Activated naive CD4-positive, alpha-beta T cell treated with anti-CD3 and anti-CD28 coated beads, Interleukin-2, amount 10 ng/mL, durations not matched to agents 7 days and 5 days (primary cell): ENCODE measurements at regions of chr1 and their contacts with region 1.

Region 1: DNA sequence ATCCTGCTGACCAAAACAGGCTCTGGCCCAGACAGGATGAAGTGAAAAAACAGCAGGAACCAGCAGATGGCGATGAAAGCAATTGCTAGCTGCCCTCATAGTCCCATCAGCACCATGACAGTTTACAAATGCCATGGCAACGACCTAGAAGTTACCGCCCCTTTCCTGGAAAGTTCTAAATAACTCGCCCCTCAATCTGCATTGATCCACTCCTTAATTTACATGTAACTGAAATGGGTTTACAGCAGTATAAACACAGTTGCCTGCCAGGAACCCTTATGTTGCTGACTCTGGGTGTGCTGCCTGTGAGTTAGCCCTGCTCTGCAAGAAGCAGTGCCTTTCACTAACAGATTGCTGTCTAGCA is 65.5 kb upstream of the CR1L start:
- DNase-seq: peak; percentile 65
- H3K4me3 Mint-ChIP-seq: no peak overlapping the region
- H3K27ac Mint-ChIP-seq: no peak overlapping the region
- H3K4me1 Mint-ChIP-seq: peaks cover 5% of the 10 kb centered on the region
- H3K27me3 Mint-ChIP-seq: peaks cover 23% of the 10 kb centered on the region

Region 2: GRCh38 chr1:207454046-207454964 is 125.1 kb before region 1 on chr1 and contains the start of gene CR2:
- CTCF ChIA-PET with region 1: no interaction called
- DNase-seq: peak; percentile 52
- H3K4me3 Mint-ChIP-seq: peak within 1 kb of the TSS; percentile 39
- H3K27ac Mint-ChIP-seq: no peak within 1 kb of the TSS
- H3K4me1 Mint-ChIP-seq: peaks cover 11% of the 10 kb centered on the region
- H3K27me3 Mint-ChIP-seq: peaks cover 27% of the 10 kb centered on the region

Region 3: DNA sequence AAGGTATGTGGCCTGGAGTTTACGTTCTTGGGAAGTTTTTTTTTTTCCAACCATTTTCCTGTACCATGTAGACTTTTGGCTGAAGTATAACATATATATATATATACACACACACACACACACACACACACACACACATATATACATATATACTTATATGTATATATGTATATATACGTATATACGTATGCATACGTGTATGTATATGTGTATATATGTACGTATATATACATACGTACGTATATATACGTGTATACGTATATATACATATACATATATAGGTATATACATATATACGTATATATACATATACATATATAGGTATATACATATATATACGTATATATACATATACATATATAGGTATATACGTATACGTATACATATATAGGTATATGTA is 64.5 kb before region 1 on chr1:
- CTCF ChIA-PET with region 1: no interaction called
- DNase-seq: no peak
- H3K4me3 Mint-ChIP-seq: no peak overlapping the region
- H3K27ac Mint-ChIP-seq: no peak overlapping the region
- H3K4me1 Mint-ChIP-seq: no peaks in the 10 kb centered on the region
- H3K27me3 Mint-ChIP-seq: peaks cover 13% of the 10 kb centered on the region

Region 4: DNA sequence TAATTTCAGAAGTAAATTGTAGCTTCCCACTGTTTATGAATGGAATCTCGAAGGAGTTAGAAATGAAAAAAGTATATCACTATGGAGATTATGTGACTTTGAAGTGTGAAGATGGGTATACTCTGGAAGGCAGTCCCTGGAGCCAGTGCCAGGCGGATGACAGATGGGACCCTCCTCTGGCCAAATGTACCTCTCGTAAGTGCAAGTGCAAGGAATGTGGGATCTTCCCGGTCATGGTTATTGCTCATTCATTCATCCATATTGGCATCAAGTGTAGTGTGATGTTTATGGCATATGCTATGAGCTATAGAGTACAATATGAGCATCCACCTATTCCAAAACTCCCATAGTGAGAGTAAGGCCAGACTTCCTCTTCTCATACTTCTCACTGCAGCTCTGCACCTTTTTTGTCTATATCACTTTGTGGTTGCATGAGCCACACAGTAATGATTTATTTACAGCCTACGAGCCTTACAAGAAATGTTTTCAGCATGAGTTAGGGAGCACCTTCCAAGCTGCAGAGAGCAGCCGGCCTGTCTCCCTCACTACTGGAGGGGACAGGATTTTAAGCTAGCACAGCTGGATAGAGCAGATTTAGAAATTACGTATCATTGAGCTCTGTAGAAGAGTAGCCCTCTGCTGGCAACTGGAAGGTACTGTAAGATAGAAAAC is 40.6 kb after region 1 on chr1:
- CTCF ChIA-PET with region 1: interaction called, 16 read pairs
- DNase-seq: peak; percentile 21
- H3K4me3 Mint-ChIP-seq: no peak overlapping the region
- H3K27ac Mint-ChIP-seq: no peak overlapping the region
- H3K4me1 Mint-ChIP-seq: no peaks in the 10 kb centered on the region
- H3K27me3 Mint-ChIP-seq: no peaks in the 10 kb centered on the region

Region 5: DNA sequence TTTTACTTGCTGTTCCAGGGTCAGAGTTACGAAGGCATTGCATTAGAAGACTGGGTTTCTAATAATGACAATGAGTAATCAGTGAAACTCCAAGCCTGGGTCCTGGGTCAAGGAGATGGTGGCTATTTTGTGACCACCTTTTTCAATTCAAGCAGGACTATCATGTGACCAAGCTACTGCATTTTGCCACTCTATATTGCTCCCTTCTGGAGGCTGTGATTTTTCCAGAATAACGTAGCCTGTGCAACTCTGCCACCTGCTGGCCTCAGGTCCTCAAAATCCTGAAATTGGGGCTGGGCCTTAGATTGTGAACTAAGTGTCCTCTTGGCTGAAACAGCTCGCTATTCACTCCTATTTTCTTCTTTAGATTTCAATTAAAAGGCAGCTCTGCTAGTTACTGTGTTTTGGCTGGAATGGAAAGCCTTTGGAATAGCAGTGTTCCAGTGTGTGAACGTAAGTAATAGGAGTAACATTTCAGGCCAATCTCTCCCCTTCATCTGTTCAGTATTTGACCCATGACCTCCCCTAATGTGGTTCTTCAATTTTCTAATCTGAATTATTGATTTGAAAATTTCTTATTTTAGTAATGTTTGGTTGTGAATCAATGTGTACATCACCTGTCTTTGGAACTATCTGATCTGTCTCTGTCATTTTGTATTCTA is 119.5 kb after region 1 on chr1:
- CTCF ChIA-PET with region 1: interaction called, 16 read pairs
- DNase-seq: peak; percentile 57
- H3K4me3 Mint-ChIP-seq: no peak overlapping the region
- H3K27ac Mint-ChIP-seq: no peak overlapping the region
- H3K4me1 Mint-ChIP-seq: no peaks in the 10 kb centered on the region
- H3K27me3 Mint-ChIP-seq: peaks cover 26% of the 10 kb centered on the region